ENCODE measurements at regions of chr1 and their contacts with region 1.

Region 1: GRCh38 chr1:111507411-111508201 is 4.2 kb upstream of the ADORA3 start:
- DNase-seq: peak; percentile 19 to 79 (median 64)
- ATAC-seq: peak; percentile 62
- H3K4me3 ChIP-seq: peak overlapping the region; percentile 38 to 58
- H3K4me3 Mint-ChIP-seq: peak overlapping the region; percentile 78
- H3K27ac ChIP-seq: peak overlapping the region; percentile 55 to 90
- H3K27ac Mint-ChIP-seq: peak overlapping the region; percentile 95
- H3K4me1 ChIP-seq: peaks cover 88% of the 10 kb centered on the region
- H3K4me1 Mint-ChIP-seq: peaks cover 52% of the 10 kb centered on the region
- H3K27me3 ChIP-seq: no peaks in the 10 kb centered on the region
- H3K27me3 Mint-ChIP-seq: no peaks in the 10 kb centered on the region
- CTCF ChIP-seq: no peak

Region 2: GRCh38 chr1:111441573-111442192 is 65.9 kb before region 1 on chr1:
- CTCF ChIA-PET with region 1: interaction called, 14 read pairs
- POLR2A ChIA-PET with region 1: no interaction called
- intact Hi-C with region 1: loop called in 1 of 2 experiments (anchors 5 kb)
- DNase-seq: peak; percentile 42 to 80 (median 71)
- ATAC-seq: peak; percentile 97
- H3K4me3 ChIP-seq: no peak overlapping the region
- H3K4me3 Mint-ChIP-seq: no peak overlapping the region
- H3K27ac ChIP-seq: no peak overlapping the region
- H3K27ac Mint-ChIP-seq: peak overlapping the region; percentile 80
- H3K4me1 ChIP-seq: peaks cover 16% of the 10 kb centered on the region
- H3K4me1 Mint-ChIP-seq: peaks cover 42% of the 10 kb centered on the region
- H3K27me3 ChIP-seq: no peaks in the 10 kb centered on the region
- H3K27me3 Mint-ChIP-seq: no peaks in the 10 kb centered on the region
- CTCF ChIP-seq: peak; percentile 57

Region 3: DNA sequence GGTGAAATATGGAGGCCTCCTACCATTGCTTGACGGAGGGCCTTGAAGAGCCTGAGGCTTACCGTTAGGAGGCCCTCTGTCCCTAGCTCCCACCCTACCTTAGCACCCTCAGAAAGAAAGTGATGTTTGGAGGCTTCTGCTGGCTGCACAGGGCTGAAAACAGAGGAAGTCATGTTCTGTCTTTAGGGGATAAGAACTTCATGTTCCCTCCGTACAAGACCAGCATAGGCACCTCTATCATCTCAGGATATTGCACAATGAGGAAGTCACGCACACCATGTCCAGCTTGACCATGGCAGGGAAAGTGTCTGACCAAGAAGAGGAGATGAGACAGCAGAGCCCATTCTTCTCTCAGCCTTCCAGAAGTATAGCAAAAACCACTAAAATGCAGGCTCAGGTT is 18.0 kb before region 1 on chr1:
- CTCF ChIA-PET with region 1: interaction called, 48 read pairs
- POLR2A ChIA-PET with region 1: interaction called, 4 read pairs
- intact Hi-C with region 1: no loop called
- DNase-seq: no peak
- ATAC-seq: no peak
- H3K4me3 ChIP-seq: no peak overlapping the region
- H3K4me3 Mint-ChIP-seq: no peak overlapping the region
- H3K27ac ChIP-seq: no peak overlapping the region
- H3K27ac Mint-ChIP-seq: no peak overlapping the region
- H3K4me1 ChIP-seq: no peaks in the 10 kb centered on the region
- H3K4me1 Mint-ChIP-seq: peaks cover under 1% of the 10 kb centered on the region
- H3K27me3 ChIP-seq: no peaks in the 10 kb centered on the region
- H3K27me3 Mint-ChIP-seq: no peaks in the 10 kb centered on the region
- CTCF ChIP-seq: no peak

Region 4: DNA sequence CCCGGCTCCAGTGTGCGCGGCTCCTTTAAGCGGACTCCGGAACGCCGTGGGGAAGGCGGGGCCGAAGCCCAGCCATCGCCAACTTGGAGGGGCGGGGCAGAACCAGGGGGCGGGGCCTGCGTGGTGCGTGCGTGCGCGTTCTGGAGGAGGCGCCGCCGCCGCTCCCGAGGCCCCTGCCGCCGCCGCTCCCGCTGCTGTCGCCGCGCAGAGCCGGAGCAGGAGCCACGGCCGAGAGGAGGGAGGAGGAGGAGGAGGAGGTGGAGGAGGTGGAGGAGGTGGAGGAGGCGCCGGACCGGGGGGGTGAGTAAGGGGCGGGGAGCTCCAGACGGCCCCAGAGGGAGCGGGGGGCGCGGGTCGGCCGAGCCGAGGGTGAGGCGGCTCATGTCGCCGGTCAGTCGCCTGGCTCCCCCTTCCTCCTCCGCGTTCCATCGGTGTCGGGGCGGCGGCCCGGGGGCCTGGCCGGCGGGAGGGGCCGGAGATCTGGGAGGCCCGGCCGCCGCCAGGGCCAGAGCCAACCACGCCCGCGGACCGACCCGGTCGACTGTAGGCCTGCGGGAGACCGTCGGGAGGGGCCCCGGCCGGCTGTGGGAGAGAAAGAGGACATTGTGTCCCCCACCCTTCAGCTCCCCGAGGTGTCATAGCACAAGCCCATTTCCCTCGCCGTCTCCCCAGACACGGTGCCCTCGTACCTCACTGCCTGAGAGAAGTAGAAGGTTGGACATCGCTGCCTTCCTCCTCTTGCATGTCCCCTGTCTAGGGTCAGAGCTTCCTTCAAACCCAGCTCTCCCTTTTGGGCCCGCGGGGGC is 112.2 kb after region 1 on chr1 and contains the start of gene RAP1A:
- CTCF ChIA-PET with region 1: interaction called, 34 read pairs
- POLR2A ChIA-PET with region 1: interaction called, 8 read pairs
- intact Hi-C with region 1: loop called in 1 of 2 experiments (anchors 2 kb)
- DNase-seq: peak; percentile 93 to 97 (median 94)
- ATAC-seq: peak; percentile 80
- H3K4me3 ChIP-seq: peak within 1 kb of the TSS; percentile 71 to 87
- H3K4me3 Mint-ChIP-seq: peak within 1 kb of the TSS; percentile 95
- H3K27ac ChIP-seq: peak within 1 kb of the TSS; percentile 66 to 86
- H3K27ac Mint-ChIP-seq: peak within 1 kb of the TSS; percentile 95
- H3K4me1 ChIP-seq: peaks cover 60% of the 10 kb centered on the region
- H3K4me1 Mint-ChIP-seq: peaks cover 70% of the 10 kb centered on the region
- H3K27me3 ChIP-seq: no peaks in the 10 kb centered on the region
- H3K27me3 Mint-ChIP-seq: no peaks in the 10 kb centered on the region
- CTCF ChIP-seq: no peak
- total RNA-seq, gene RAP1A: 63.4 to 68.5 TPM

Region 5: GRCh38 chr1:111666841-111667270 is 159.2 kb after region 1 on chr1:
- CTCF ChIA-PET with region 1: interaction called, 21 read pairs
- POLR2A ChIA-PET with region 1: no interaction called
- intact Hi-C with region 1: no loop called
- DNase-seq: no peak
- ATAC-seq: no peak
- H3K4me3 ChIP-seq: no peak overlapping the region
- H3K4me3 Mint-ChIP-seq: no peak overlapping the region
- H3K27ac ChIP-seq: no peak overlapping the region
- H3K27ac Mint-ChIP-seq: peak overlapping the region; percentile 19
- H3K4me1 ChIP-seq: peaks cover 47% of the 10 kb centered on the region
- H3K4me1 Mint-ChIP-seq: peaks cover 77% of the 10 kb centered on the region
- H3K27me3 ChIP-seq: no peaks in the 10 kb centered on the region
- H3K27me3 Mint-ChIP-seq: no peaks in the 10 kb centered on the region
- CTCF ChIP-seq: no peak

Region 6: GRCh38 chr1:111702504-111703050 is 195.0 kb after region 1 on chr1:
- CTCF ChIA-PET with region 1: interaction called, 16 read pairs
- POLR2A ChIA-PET with region 1: interaction called, 4 read pairs
- intact Hi-C with region 1: no loop called
- DNase-seq: no peak
- ATAC-seq: no peak
- H3K4me3 ChIP-seq: no peak overlapping the region
- H3K4me3 Mint-ChIP-seq: no peak overlapping the region
- H3K27ac ChIP-seq: no peak overlapping the region
- H3K27ac Mint-ChIP-seq: no peak overlapping the region
- H3K4me1 ChIP-seq: no peaks in the 10 kb centered on the region
- H3K4me1 Mint-ChIP-seq: peaks cover 7% of the 10 kb centered on the region
- H3K27me3 ChIP-seq: no peaks in the 10 kb centered on the region
- H3K27me3 Mint-ChIP-seq: no peaks in the 10 kb centered on the region
- CTCF ChIP-seq: no peak

Region 7: DNA sequence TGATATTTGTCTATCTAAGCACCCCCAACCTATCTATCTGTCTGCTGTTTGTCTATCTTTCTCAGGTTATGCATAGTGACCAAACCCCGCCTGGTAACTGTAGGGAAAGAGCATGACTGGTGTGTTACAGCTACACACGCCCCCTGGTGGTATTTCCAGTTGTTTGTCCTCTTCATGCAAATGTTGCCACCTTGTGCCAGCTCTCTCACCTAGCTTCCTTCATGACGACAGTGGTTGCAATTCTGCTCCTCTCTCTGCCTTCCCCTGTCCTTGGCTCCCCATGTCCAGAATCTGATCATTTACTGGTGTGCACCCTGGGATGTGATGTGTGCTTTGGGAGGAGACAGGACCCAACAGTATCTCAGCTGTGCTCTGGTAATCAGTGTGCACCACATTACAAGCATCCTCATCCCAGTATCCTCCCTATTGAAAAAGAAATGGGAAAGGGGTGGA is 239.7 kb after region 1 on chr1:
- CTCF ChIA-PET with region 1: interaction called, 13 read pairs
- POLR2A ChIA-PET with region 1: interaction called, 5 read pairs
- intact Hi-C with region 1: loop called in 1 of 2 experiments (anchors 2 kb)
- DNase-seq: peak in 8 of 9 experiments; percentile 17 to 75 (median 58)
- ATAC-seq: peak; percentile 63
- H3K4me3 ChIP-seq: no peak overlapping the region
- H3K4me3 Mint-ChIP-seq: no peak overlapping the region
- H3K27ac ChIP-seq: no peak overlapping the region
- H3K27ac Mint-ChIP-seq: no peak overlapping the region
- H3K4me1 ChIP-seq: no peaks in the 10 kb centered on the region
- H3K4me1 Mint-ChIP-seq: peaks cover 4% of the 10 kb centered on the region
- H3K27me3 ChIP-seq: no peaks in the 10 kb centered on the region
- H3K27me3 Mint-ChIP-seq: no peaks in the 10 kb centered on the region
- CTCF ChIP-seq: peak; percentile 28

Measured in CD8-positive, alpha-beta T cell (primary cell).